ENCODE measurements at regions of chr22 and their contacts with region 1.

Region 1: DNA sequence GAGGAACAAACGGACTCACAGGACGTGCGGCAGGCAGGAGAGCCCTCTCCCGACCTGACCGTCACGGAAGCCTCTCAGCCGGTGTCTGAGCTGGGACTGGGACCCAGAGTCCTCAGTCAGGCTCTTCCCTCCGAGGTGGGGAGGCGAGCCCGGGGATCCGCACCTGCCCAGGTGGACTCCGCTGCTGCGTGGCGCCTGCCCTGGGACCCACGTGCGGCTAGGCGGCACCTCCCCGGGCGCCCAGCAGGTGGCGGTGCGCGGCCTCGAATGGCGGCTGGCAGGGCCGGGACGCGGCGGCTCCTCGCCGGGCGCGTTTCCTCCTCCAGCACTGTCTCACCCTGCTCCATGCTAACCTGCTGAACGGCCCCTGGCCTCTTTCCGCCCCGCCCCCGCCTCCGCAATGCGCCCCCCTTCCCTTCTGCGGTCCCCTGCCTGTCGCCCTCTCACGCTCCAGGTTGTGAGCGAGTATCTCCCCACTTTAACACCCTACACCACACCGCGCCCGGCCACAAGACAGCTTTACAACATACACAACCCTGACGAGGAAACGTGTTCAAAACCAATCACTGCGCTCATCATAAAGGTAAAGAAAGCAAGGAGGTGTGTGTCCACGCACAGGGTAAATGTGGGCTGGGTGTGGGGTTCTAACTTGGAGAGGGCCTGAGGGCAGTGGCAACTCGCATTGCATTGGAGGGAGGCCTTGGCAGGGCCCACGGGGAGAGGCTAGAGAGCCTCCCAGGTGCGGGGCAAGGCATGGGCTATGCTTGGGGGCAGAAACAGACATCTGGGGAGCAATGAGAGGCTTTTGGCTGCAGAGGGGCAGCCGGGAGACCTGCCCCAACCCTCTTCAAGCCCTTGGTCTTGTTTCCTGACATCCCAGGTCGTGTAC is 25.9 kb upstream of the ATXN10 start:
- DNase-seq: peak; percentile 46 to 85
- ATAC-seq: peak; percentile 99

Region 2: DNA sequence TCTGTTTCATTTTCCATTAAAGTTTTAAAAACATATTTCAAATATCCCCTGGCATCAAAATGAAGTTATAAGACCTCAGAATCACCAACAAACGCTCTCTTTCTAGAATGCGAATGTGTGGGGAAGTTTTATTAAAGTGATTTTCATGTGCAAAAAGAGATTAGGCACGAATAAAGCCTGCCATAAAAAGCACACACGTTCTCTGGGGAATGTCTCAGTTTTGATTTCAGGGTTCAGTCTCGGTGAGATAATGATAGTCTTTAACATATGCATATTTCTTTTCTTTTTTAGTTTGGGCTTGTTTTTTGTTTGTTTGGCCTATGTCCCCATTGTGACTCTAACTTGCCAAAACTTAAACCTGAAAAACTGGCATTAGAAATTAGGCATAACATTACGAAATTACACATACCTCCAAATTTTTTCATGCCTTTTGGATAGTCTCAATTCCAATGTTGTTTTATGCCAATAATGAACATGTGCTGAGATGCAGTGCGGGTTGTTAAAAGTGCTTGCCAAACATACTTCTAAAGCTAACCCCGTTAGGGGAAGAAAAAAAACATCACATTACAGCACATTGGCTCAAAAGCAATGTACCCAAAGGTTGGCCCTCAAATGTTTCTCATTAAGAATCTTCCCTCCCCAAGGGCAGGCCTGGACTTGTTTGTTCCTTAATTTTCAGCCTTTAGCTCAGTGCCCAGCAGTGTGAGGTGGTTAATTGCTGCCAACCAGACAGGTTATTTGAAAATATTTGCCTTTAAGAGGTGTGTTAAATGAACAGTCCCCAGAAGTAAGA is 176.3 kb before region 1 on chr22:
- intact Hi-C with region 1: no loop called
- DNase-seq: no peak
- ATAC-seq: no peak

Region 3: GRCh38 chr22:45831394-45831793 is 185.6 kb after region 1 on chr22:
- intact Hi-C with region 1: loop called in 1 of 2 experiments (anchors 10 kb)
- DNase-seq: no peak
- ATAC-seq: no peak

Region 4: DNA sequence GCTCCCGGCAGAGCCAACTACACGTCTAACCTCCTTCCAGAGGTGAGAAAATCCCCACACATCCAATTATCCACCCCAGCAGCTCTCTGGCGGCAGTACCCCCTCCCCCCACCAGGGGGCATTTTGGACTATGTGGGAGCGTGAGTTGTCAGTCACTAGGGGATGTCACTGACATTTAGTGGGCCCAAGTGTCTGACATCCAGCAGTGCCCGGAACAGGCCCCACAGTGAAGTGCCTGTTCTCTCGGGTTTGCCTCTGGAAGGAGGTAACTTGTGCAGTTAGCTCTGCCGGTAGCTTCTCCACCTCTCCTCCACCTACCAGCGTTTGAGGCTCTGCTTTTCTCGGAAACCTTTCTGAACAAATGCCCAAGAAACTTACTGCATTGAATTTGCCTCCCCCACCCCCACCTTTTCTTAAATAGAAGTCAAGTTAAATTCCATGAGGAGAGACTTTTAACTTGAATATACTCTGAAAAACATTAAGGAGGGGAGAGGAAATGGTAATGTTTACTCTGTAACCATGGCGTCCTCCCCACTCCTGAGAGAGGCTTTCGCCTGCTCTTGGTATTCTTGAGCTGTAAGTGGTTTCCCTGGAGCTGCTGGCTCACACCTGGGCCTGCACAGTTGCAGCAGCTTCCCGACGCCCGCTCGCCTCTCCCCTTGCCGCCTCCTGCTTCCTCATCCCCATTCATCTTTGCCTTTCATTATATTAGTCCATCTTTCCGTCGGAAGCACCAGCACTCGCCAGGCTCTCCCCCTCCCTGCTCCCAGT is 218.4 kb after region 1 on chr22:
- intact Hi-C with region 1: loop called in 1 of 2 experiments (anchors 10 kb)
- DNase-seq: peak in 1 of 2 donors; percentile 78
- ATAC-seq: peak; percentile 68

Measured in left colon (tissue), 2 donors.